Activated naive CD4-positive, alpha-beta T cell treated with anti-CD3 and anti-CD28 coated beads for 36 hours (primary cell): ENCODE measurements at regions of chr2 and their contacts with region 1.

Region 1: DNA sequence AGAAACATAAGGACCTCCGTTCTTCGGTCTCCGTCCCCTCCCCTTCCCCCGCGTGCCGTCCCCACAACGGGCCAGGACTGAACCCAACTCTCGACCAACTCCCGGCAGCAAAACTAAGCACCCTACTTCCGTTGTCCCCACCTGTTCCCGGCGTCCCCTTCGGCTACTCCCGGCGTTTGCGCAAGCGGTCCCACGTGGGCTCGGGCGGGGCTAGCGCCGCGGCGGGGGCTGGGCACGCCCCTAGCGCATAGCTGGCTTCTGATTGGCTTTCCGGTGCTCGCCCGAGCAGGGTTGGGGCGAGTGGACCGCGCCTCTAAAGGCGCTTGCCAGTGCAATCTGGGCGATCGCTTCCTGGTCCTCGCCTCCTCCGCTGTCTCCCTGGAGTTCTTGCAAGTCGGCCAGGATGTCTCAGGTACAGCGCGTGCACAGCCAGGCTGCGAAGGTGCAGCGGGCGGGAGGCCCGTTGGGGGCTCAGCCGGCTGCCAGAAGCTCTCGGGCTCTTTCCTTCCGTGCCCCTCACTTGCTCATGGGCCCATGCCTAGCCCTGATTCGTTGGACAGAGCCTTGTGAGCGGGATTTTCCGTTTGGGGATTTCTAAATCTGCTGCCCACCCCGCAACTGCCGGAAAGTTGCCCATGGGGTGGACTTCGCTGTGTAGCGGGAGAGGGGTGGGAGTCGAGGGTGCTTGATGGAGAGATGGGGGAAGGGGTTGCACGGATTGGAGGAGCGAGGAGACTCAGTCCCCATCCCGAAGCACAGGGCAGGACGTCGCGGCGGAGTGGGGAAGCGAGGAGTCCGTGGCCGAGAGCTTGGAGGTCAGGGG is at the starts of genes C2orf76 and DBI:
- DNase-seq: peak; percentile 94
- H3K4me3 Mint-ChIP-seq: peak within 1 kb of the TSS; percentile 99
- H3K27ac Mint-ChIP-seq: peak within 1 kb of the TSS; percentile 92
- H3K4me1 Mint-ChIP-seq: peaks cover 42% of the 10 kb centered on the region
- H3K27me3 Mint-ChIP-seq: no peaks in the 10 kb centered on the region
- total RNA-seq, gene C2orf76: 9.5 to 11.1 TPM
- total RNA-seq, gene DBI: 133 to 134 TPM

Region 2: GRCh38 chr2:118088051-118089024 is 1278.5 kb before region 1 on chr2 and contains the start of gene INSIG2:
- CTCF ChIA-PET with region 1: no interaction called
- intact Hi-C with region 1: loop called (anchors 1 kb)
- DNase-seq: peak; percentile 94
- H3K4me3 Mint-ChIP-seq: peak within 1 kb of the TSS; percentile 86
- H3K27ac Mint-ChIP-seq: peak within 1 kb of the TSS; percentile 83
- H3K4me1 Mint-ChIP-seq: peaks cover 16% of the 10 kb centered on the region
- H3K27me3 Mint-ChIP-seq: no peaks in the 10 kb centered on the region
- total RNA-seq, gene INSIG2: 14.3 to 19.3 TPM

Region 3: GRCh38 chr2:118309946-118310680 is 1056.7 kb before region 1 on chr2:
- CTCF ChIA-PET with region 1: no interaction called
- intact Hi-C with region 1: loop called (anchors 2 kb)
- DNase-seq: peak; percentile 69
- H3K4me3 Mint-ChIP-seq: peak overlapping the region; percentile 79
- H3K27ac Mint-ChIP-seq: peak overlapping the region; percentile 90
- H3K4me1 Mint-ChIP-seq: peaks cover 2% of the 10 kb centered on the region
- H3K27me3 Mint-ChIP-seq: no peaks in the 10 kb centered on the region

Region 4: DNA sequence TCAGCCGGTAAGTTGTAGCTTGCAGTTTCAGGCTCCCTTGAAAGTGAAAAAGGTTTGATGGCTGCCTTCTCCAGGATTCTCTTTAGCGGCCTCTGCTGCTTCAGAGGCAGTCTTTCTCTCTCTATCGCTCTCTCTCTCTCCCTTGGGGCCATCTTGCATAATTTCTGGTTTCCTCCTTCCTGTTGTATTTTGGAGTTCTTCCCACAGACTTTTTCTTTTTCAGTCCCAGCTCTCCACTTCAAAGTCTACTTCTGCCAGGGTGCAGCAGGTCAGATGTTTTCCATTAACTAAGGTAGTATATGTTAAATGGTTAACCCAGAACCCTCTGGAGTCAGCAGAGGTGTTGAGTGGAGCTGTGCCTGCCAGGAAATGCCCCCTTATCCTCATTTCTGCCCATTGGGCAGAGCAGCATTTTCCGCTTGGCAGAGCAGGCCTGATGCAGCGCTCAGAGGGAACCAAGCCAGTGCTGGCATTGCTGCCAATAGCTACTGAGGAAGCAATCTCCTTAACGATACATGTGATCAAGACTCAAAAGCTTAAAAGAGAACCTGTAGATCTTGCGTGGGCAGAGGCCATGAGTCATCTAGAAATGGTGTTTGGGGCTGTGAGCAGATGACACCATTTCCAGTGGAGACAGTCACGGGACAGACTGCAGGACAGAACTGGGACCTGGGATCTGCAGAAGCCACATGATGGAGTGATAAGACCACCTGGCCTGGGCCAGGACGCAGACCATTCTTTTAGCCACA is 20.7 kb after region 1 on chr2:
- CTCF ChIA-PET with region 1: no interaction called
- intact Hi-C with region 1: no loop called
- DNase-seq: peak; percentile 25
- H3K4me3 Mint-ChIP-seq: no peak overlapping the region
- H3K27ac Mint-ChIP-seq: no peak overlapping the region
- H3K4me1 Mint-ChIP-seq: peaks cover 6% of the 10 kb centered on the region
- H3K27me3 Mint-ChIP-seq: peaks cover 8% of the 10 kb centered on the region

Region 5: GRCh38 chr2:119694845-119695521 is 328.1 kb after region 1 on chr2:
- CTCF ChIA-PET with region 1: no interaction called
- intact Hi-C with region 1: loop called (anchors 5 kb)
- DNase-seq: peak; percentile 51
- H3K4me3 Mint-ChIP-seq: peak overlapping the region; percentile 32
- H3K27ac Mint-ChIP-seq: no peak overlapping the region
- H3K4me1 Mint-ChIP-seq: peaks cover 48% of the 10 kb centered on the region
- H3K27me3 Mint-ChIP-seq: no peaks in the 10 kb centered on the region